CD8-positive, alpha-beta T cell (primary cell): ENCODE measurements at regions of chr22 and their contacts with region 1.

Region 1: GRCh38 chr22:19854778-19855503 is at the starts of genes GNB1L and RTL10:
- DNase-seq: peak; percentile 87 to 99 (median 96)
- ATAC-seq: peak; percentile 91
- H3K4me3 ChIP-seq: peak within 1 kb of the TSS; percentile 97 to 99
- H3K4me3 Mint-ChIP-seq: peak within 1 kb of the TSS; percentile 93
- H3K27ac ChIP-seq: peak within 1 kb of the TSS; percentile 83 to 85
- H3K27ac Mint-ChIP-seq: peak within 1 kb of the TSS; percentile 98
- H3K4me1 ChIP-seq: peaks cover 37% of the 10 kb centered on the region
- H3K4me1 Mint-ChIP-seq: peaks cover 63% of the 10 kb centered on the region
- H3K27me3 ChIP-seq: no peaks in the 10 kb centered on the region
- H3K27me3 Mint-ChIP-seq: no peaks in the 10 kb centered on the region
- CTCF ChIP-seq: no peak
- total RNA-seq, gene GNB1L: 5.8 to 6.9 TPM
- total RNA-seq, gene RTL10: 21.5 to 22.9 TPM

Region 2: DNA sequence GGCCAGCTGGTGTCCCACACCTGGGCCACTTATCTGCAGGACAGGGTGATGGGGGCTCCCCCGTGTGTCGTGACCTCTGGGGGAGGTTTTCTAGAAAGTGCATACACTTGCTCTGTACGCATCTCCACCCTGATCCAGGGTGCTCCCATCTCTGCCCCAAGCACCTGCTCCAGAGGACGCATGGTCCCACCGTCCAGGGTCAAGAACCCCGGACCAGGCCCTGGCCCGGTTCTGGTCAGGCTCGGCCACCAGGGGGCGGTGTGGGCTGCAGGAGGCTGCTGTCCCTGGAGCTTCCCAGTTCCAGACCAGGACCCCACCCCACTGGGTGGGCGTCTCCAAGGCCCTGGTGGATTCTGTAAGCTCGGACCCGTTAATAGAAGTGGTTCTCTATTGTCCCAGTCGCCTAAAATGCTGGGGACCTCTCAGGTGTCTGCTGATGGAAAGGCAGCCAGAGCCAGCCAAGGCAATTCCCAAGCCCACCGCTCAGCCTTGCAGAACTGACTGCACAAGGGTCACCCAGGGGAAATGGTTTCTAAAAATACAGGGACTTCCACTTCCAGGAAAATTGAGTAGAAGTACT is 175.3 kb before region 1 on chr22:
- CTCF ChIA-PET with region 1: no interaction called
- POLR2A ChIA-PET with region 1: no interaction called
- intact Hi-C with region 1: no loop called
- DNase-seq: peak in 7 of 9 experiments; percentile 25 to 72 (median 49)
- ATAC-seq: no peak
- H3K4me3 ChIP-seq: no peak overlapping the region
- H3K4me3 Mint-ChIP-seq: no peak overlapping the region
- H3K27ac ChIP-seq: no peak overlapping the region
- H3K27ac Mint-ChIP-seq: no peak overlapping the region
- H3K4me1 ChIP-seq: no peaks in the 10 kb centered on the region
- H3K4me1 Mint-ChIP-seq: no peaks in the 10 kb centered on the region
- H3K27me3 ChIP-seq: peaks cover 0 to 4% of the 10 kb centered on the region in 2 experiments
- H3K27me3 Mint-ChIP-seq: peaks cover 27% of the 10 kb centered on the region
- CTCF ChIP-seq: peak; percentile 83

Region 3: GRCh38 chr22:19717691-19718455 is 137.1 kb before region 1 on chr22:
- CTCF ChIA-PET with region 1: no interaction called
- POLR2A ChIA-PET with region 1: no interaction called
- intact Hi-C with region 1: loop called in 1 of 2 experiments (anchors 2 kb)
- DNase-seq: peak; percentile 71 to 90 (median 78)
- ATAC-seq: peak; percentile 95
- H3K4me3 ChIP-seq: peak overlapping the region; percentile 29 to 46
- H3K4me3 Mint-ChIP-seq: peak overlapping the region; percentile 65
- H3K27ac ChIP-seq: no peak overlapping the region
- H3K27ac Mint-ChIP-seq: no peak overlapping the region
- H3K4me1 ChIP-seq: peaks cover 29% of the 10 kb centered on the region
- H3K4me1 Mint-ChIP-seq: peaks cover 12% of the 10 kb centered on the region
- H3K27me3 ChIP-seq: peaks cover 17 to 20% of the 10 kb centered on the region in 2 experiments
- H3K27me3 Mint-ChIP-seq: peaks cover 36% of the 10 kb centered on the region
- CTCF ChIP-seq: peak; percentile 97

Region 4: DNA sequence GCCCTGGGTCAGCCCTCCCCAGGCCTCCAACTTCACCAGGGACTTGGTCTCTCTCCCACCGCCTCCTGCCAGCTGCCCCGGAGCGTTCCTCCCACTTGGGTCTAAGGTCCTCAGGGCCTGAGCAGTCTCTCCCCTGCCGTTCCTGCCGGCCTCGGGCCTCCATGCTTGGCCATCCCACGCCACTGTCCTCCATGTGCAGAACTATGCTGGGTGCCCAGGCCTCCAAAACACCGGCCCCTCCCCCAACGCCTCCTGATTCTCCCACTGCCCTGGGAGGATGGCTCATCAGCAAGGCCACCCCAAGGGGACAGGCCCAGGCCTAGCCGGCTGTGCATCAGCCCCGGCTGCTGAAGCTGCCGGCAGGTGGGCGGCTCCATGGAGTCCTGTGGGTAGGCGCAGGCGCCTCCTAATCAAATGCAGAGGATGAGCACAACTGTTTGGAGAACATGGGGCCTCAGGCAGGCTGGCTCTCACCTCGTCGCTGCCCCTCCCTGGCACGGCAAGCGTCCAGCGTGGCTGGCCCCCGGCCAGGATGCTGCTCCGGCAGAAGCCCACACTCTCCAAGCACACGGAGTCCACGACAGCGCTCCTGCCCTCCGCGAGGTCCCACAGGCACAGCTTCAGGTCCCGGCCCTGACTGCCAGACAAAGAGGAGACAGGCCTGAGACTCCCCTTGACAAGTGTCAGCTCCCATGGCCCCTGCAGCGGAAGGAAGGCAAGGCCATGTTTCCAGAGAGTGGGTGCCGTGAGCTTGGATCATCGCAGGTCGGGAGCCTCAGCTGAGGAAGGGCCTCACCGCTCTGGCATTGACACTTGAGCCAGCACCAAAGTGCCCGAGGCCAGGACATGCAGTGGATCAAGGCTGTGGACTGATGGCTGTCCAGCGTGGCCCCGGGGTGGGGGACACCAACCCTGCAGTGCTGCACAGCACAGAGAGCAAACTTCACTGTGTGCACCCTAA is 42.9 kb before region 1 on chr22:
- CTCF ChIA-PET with region 1: no interaction called
- POLR2A ChIA-PET with region 1: no interaction called
- intact Hi-C with region 1: no loop called
- DNase-seq: peak in 1 of 9 experiments; percentile 8
- ATAC-seq: no peak
- H3K4me3 ChIP-seq: no peak overlapping the region
- H3K4me3 Mint-ChIP-seq: no peak overlapping the region
- H3K27ac ChIP-seq: no peak overlapping the region
- H3K27ac Mint-ChIP-seq: no peak overlapping the region
- H3K4me1 ChIP-seq: peaks cover 13% of the 10 kb centered on the region
- H3K4me1 Mint-ChIP-seq: peaks cover 2% of the 10 kb centered on the region
- H3K27me3 ChIP-seq: no peaks in the 10 kb centered on the region
- H3K27me3 Mint-ChIP-seq: no peaks in the 10 kb centered on the region
- CTCF ChIP-seq: no peak

Region 5: DNA sequence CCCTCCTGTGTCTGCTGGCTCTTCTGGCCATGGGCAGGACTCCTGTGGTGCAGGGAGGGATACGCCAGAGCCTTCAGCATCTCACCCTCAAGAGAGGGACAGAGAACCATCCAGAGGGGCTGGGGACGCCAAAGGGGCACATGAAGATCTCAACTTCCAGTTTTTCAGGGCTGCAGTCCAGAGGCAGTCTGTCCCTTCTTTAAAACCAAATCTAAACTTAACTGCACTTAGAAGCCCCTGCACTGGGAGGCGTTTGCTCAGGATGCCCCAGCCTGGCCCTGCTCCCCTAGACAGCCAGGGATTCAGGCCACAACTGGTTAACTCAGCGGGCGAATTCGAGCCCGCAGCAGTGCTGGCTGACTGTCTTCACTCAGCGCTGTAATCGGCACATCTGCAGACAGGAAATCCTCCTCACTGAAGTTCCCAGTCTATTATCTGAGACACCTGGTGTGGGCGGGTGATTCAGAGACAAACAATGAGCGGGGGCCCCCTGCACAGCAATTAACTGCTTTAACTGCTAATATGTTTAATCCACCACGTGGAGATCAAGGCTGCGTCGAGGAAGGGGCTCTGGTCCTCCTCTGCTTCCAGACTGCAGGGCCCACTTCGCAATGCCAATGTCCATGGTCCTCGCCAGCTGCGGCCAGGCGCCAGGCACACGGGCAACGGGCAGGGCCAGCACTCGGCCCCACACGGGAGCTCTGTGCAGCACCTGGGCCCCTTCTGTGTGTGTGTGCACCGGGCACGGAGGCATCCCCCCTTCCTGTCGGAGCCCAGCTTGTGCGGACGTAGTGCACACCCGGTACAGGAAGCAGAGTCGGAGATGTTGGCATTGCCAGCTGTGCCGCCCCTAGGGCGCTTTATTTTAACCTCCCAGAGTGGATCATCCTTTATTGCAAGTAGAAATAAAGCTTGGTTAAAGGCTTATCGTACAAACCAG is 36.6 kb after region 1 on chr22:
- CTCF ChIA-PET with region 1: interaction called, 17 read pairs
- POLR2A ChIA-PET with region 1: interaction called, 32 read pairs
- intact Hi-C with region 1: loop called (anchors 1 kb)
- DNase-seq: peak; percentile 66 to 89 (median 82)
- ATAC-seq: peak; percentile 77
- H3K4me3 ChIP-seq: peak overlapping the region; percentile 45 to 55
- H3K4me3 Mint-ChIP-seq: peak overlapping the region; percentile 85
- H3K27ac ChIP-seq: peak overlapping the region; percentile 72 to 82
- H3K27ac Mint-ChIP-seq: peak overlapping the region; percentile 99
- H3K4me1 ChIP-seq: peaks cover 88% of the 10 kb centered on the region
- H3K4me1 Mint-ChIP-seq: peaks cover 90% of the 10 kb centered on the region
- H3K27me3 ChIP-seq: no peaks in the 10 kb centered on the region
- H3K27me3 Mint-ChIP-seq: no peaks in the 10 kb centered on the region
- CTCF ChIP-seq: no peak

Region 6: GRCh38 chr22:19896665-19897355 is 41.9 kb after region 1 on chr22:
- CTCF ChIA-PET with region 1: interaction called, 17 read pairs
- POLR2A ChIA-PET with region 1: interaction called, 32 read pairs
- intact Hi-C with region 1: loop called in 1 of 2 experiments (anchors 1 kb)
- DNase-seq: peak in 7 of 9 experiments; percentile 24 to 69 (median 43)
- ATAC-seq: peak; percentile 17
- H3K4me3 ChIP-seq: no peak overlapping the region
- H3K4me3 Mint-ChIP-seq: no peak overlapping the region
- H3K27ac ChIP-seq: no peak overlapping the region
- H3K27ac Mint-ChIP-seq: peak overlapping the region; percentile 99
- H3K4me1 ChIP-seq: peaks cover 57% of the 10 kb centered on the region
- H3K4me1 Mint-ChIP-seq: peaks cover 55% of the 10 kb centered on the region
- H3K27me3 ChIP-seq: no peaks in the 10 kb centered on the region
- H3K27me3 Mint-ChIP-seq: no peaks in the 10 kb centered on the region
- CTCF ChIP-seq: no peak

Region 7: GRCh38 chr22:19909350-19910179 is 54.6 kb after region 1 on chr22:
- CTCF ChIA-PET with region 1: interaction called, 10 read pairs
- POLR2A ChIA-PET with region 1: no interaction called
- intact Hi-C with region 1: no loop called
- DNase-seq: peak; percentile 71 to 91 (median 84)
- ATAC-seq: peak; percentile 91
- H3K4me3 ChIP-seq: no peak overlapping the region
- H3K4me3 Mint-ChIP-seq: no peak overlapping the region
- H3K27ac ChIP-seq: peak overlapping the region in 1 of 2 experiments; percentile 6
- H3K27ac Mint-ChIP-seq: peak overlapping the region; percentile 28
- H3K4me1 ChIP-seq: peaks cover 8% of the 10 kb centered on the region
- H3K4me1 Mint-ChIP-seq: peaks cover 4% of the 10 kb centered on the region
- H3K27me3 ChIP-seq: no peaks in the 10 kb centered on the region
- H3K27me3 Mint-ChIP-seq: no peaks in the 10 kb centered on the region
- CTCF ChIP-seq: peak; percentile 69

Region 8: GRCh38 chr22:19941365-19942082 is 86.6 kb after region 1 on chr22 and contains the starts of genes COMT and TXNRD2:
- CTCF ChIA-PET with region 1: no interaction called
- POLR2A ChIA-PET with region 1: interaction called, 3 read pairs
- intact Hi-C with region 1: loop called in 1 of 2 experiments (anchors 1 kb)
- DNase-seq: peak; percentile 38 to 85 (median 73)
- ATAC-seq: peak; percentile 87
- H3K4me3 ChIP-seq: peak within 1 kb of the TSS; percentile 88 to 99
- H3K4me3 Mint-ChIP-seq: peak within 1 kb of the TSS; percentile 91
- H3K27ac ChIP-seq: peak within 1 kb of the TSS; percentile 66 to 71
- H3K27ac Mint-ChIP-seq: peak within 1 kb of the TSS; percentile 96
- H3K4me1 ChIP-seq: peaks cover 29% of the 10 kb centered on the region
- H3K4me1 Mint-ChIP-seq: peaks cover 36% of the 10 kb centered on the region
- H3K27me3 ChIP-seq: no peaks in the 10 kb centered on the region
- H3K27me3 Mint-ChIP-seq: no peaks in the 10 kb centered on the region
- CTCF ChIP-seq: no peak
- total RNA-seq, gene COMT: 10.5 to 11.0 TPM
- total RNA-seq, gene TXNRD2: 11.0 to 14.1 TPM

Region 9: DNA sequence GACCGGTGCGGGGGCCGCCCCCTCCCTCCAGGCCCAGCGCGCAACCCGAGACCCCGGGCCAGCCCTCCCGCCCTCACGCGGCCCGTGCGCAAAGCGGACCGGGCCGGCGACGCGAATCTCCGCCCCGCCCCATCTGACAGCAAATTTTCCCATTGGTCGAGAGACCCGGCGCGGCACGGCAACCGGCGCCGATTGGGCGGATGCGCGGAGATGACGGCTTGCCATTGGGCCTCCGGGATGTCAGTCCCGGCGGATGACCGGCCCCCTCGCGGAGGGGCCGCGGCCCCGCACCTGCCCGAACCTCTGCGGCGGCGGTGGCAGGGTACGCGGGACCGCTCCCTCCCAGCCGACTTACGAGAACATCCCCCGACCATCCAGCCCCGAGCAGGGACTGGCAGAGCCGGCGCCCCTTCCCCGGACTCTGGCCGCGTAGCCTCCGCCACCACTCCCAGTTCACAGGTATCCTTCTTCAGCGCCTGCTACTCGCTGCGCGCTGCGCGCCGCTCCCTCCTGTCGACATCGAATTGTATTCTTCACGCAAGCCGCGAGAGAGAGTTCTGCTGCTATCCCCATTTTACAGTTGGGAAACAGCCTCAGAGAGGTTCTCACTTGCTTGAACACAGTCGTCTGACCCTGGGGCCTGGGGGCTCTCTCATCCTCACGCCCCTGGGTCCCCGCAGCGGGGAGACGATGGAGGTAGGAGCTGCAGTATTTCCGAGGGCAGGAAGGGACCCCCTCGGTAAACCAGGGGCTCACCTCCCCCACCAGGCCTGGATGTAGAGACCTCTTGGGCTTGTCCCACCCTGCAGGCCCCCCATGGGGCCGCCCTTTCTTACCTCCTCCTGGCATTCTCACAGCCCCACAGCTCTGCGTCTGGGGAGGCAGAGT is 162.0 kb after region 1 on chr22 and contains the start of gene ARVCF:
- CTCF ChIA-PET with region 1: no interaction called
- POLR2A ChIA-PET with region 1: no interaction called
- intact Hi-C with region 1: loop called in 1 of 2 experiments (anchors 5 kb)
- DNase-seq: peak; percentile 85 to 96 (median 92)
- ATAC-seq: peak; percentile 66
- H3K4me3 ChIP-seq: peak within 1 kb of the TSS; percentile 79 to 81
- H3K4me3 Mint-ChIP-seq: peak within 1 kb of the TSS; percentile 91
- H3K27ac ChIP-seq: no peak within 1 kb of the TSS
- H3K27ac Mint-ChIP-seq: peak within 1 kb of the TSS; percentile 14
- H3K4me1 ChIP-seq: peaks cover 19% of the 10 kb centered on the region
- H3K4me1 Mint-ChIP-seq: peaks cover 25% of the 10 kb centered on the region
- H3K27me3 ChIP-seq: no peaks in the 10 kb centered on the region
- H3K27me3 Mint-ChIP-seq: no peaks in the 10 kb centered on the region
- CTCF ChIP-seq: no peak
- total RNA-seq, gene ARVCF: 1.1 to 2.3 TPM